Aorta (tissue), 5 donors: ENCODE measurements at regions of chr6 and their contacts with region 1.

Region 1: DNA sequence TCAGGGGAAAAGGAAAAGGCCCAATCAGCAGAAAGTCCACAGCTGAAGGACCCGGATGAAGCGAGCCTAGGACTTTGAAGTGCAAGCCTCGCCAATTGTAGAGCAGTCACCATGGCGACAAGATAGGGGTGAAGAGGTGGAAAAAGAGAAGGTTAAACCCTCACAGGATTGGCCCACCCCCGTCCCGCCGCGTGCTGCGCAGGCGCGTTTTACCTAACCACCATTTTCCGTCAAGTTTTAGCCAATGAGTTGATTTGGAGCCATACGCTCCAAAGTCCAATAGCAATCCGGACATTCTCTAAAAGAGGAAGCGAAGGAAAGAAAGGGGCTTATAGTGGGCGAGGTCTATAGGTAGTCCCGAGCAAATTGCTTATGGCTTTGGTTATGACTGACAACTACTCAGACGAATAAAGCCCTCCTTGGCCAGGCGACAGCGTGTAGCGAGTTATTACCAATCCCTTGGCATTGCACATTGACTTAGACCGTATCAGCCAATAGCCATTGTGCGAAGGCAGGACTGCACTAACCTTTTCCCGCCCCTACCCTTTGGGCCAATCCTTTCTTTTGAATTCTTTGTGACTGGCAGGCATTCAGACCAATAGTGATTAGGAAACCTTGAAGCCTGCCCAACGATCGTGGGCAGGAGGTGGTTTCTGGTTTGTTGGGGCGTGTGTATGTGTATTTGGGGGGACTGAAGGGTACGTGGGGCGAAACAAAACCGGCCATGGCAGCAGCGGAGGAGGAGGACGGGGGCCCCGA is at the start of gene RNF5:
- DNase-seq: peak; percentile 95 to 98
- ATAC-seq: peak; percentile 93
- H3K4me3 ChIP-seq: peak within 1 kb of the TSS; percentile 45 to 54
- H3K27ac ChIP-seq: peak within 1 kb of the TSS; percentile 95
- H3K4me1 ChIP-seq: peaks cover 0 to 2% of the 10 kb centered on the region in 2 donors
- H3K27me3 ChIP-seq: no peaks in the 10 kb centered on the region
- total RNA-seq, gene RNF5: 35.0 to 44.5 TPM

Region 2: DNA sequence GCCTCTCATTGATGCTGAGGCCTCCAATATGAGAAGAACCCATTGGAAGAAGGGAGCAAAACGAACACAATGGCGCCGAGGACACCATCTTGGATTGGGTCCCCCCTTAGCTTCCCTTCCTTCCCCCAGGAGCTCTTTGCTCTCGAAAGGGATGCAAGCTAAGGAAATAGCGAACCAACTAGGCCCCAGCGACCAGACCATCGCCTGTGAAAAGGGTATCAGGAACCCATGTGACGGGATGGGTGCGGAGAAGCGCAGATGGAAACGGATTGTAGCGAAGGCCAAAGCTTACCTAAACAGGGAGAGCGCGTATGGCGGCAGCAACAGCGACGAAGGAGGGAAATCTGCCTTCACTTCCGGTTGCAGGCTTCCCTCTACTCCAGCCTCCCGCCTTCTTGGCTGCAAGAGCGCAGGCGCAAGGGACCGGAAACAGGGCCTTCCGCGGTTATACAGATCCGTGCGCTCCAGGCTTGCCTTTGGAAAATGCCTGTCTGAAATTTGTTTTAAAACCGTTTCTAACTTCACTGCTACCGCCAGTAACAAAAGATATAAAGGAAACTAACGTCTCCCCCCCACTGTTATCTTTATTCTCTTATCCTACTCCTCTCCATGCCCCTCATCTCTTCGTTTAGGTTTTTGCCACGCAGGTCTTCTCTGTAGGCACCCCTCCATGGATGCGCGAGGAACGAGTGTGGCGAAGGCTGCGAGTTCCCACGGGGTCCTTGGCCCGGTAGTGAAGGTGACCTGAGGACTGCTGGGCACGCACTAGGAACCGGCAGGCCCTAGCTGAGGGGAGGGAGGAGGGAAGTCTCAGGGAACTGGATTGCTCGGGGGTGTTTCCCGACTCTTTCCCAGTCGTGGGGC is 636.1 kb before region 1 on chr6 and contains the start of gene DDX39B:
- intact Hi-C with region 1: loop called in 1 of 2 experiments (anchors 5 kb)
- DNase-seq: peak; percentile 97
- ATAC-seq: peak; percentile 97
- H3K4me3 ChIP-seq: peak within 1 kb of the TSS; percentile 77 to 78
- H3K27ac ChIP-seq: peak within 1 kb of the TSS; percentile 47 to 94
- H3K4me1 ChIP-seq: peaks cover 3% of the 10 kb centered on the region in 2 donors
- H3K27me3 ChIP-seq: no peaks in the 10 kb centered on the region
- total RNA-seq, gene DDX39B: 235 to 270 TPM

Region 3: DNA sequence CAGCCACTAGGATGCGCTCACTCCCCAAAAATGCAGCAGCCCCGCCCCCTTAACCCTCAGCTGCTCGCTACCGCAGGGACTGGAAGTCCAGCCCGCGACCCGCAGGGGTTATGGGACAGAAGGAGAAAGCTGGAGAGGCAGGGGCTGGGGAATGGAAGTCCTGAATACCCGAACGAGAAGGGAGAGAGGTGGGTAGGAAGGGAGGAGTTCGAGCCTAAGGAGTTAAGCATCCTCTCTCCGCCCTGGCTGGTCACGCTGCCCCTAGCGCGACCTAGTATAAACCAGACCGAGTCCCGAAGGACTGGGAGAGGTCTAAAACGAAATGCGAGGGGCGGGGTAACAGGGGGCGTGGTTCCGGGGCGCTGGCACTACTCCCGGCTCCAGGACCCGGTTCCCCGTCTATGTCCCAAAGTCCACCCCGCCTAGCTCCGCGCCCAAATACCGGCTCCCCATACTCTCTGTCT is 448.4 kb before region 1 on chr6:
- intact Hi-C with region 1: loop called in 1 of 2 experiments (anchors 5 kb)
- DNase-seq: peak; percentile 96 to 97
- ATAC-seq: peak; percentile 93
- H3K4me3 ChIP-seq: peak overlapping the region; percentile 83 to 92
- H3K27ac ChIP-seq: peak overlapping the region; percentile 88 to 94
- H3K4me1 ChIP-seq: no peaks in the 10 kb centered on the region
- H3K27me3 ChIP-seq: no peaks in the 10 kb centered on the region

Region 4: GRCh38 chr6:31901953-31902643 is 275.9 kb before region 1 on chr6 and contains the start of gene ZBTB12:
- intact Hi-C with region 1: loop called in 1 of 2 experiments (anchors 10 kb)
- DNase-seq: peak; percentile 93 to 95
- ATAC-seq: peak; percentile 89
- H3K4me3 ChIP-seq: peak within 1 kb of the TSS; percentile 79 to 87
- H3K27ac ChIP-seq: peak within 1 kb of the TSS in 1 of 2 donors; percentile 56
- H3K4me1 ChIP-seq: no peaks in the 10 kb centered on the region
- H3K27me3 ChIP-seq: no peaks in the 10 kb centered on the region
- total RNA-seq, gene ZBTB12: 1.8 to 4.9 TPM

Region 5: GRCh38 chr6:31971993-31972708 is 205.8 kb before region 1 on chr6 and contains the start of gene DXO:
- intact Hi-C with region 1: loop called in 1 of 2 experiments (anchors 10 kb)
- DNase-seq: peak; percentile 98
- ATAC-seq: peak; percentile 96
- H3K4me3 ChIP-seq: peak within 1 kb of the TSS; percentile 40 to 70
- H3K27ac ChIP-seq: peak within 1 kb of the TSS; percentile 83 to 85
- H3K4me1 ChIP-seq: no peaks in the 10 kb centered on the region
- H3K27me3 ChIP-seq: no peaks in the 10 kb centered on the region
- total RNA-seq, gene DXO: 20.2 to 20.5 TPM

Region 6: GRCh38 chr6:32129297-32130088 is 48.5 kb before region 1 on chr6:
- intact Hi-C with region 1: loop called in 1 of 2 experiments (anchors 1 kb)
- DNase-seq: no peak
- ATAC-seq: peak; percentile 82
- H3K4me3 ChIP-seq: peak overlapping the region; percentile 48 to 81
- H3K27ac ChIP-seq: peak overlapping the region; percentile 5 to 92
- H3K4me1 ChIP-seq: peaks cover 0 to 2% of the 10 kb centered on the region in 2 donors
- H3K27me3 ChIP-seq: no peaks in the 10 kb centered on the region

Region 7: DNA sequence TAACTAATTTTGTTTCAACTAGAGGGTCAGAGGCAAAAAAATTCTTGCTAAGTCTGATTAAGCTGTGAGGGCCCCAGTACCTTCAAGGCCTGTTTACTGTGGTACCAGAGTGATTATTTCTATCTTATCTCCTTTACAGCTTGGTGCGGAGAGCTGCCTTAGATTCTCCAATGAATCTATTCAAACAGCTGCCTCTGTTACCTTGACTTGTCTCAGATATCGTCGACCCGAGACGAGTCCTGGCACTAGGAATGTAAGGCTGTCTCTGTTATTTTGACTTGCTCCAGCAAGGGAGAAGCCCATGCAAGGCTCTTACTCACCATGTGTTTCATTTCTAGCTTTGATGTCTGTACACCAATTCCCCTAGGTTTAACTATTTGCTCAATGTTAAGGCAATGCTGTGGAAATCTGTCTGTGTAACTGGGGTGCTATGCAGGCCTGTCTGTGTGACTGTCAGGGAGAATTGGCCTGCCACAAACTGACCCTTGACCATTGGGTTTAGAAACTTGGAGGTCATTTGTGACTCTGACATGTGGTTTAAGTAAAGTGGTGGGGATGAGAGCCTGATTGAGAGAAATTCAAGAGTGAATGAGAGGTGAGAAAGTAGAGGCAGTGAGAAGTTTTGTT is 37.4 kb before region 1 on chr6:
- intact Hi-C with region 1: no loop called
- DNase-seq: no peak
- ATAC-seq: no peak
- H3K4me3 ChIP-seq: no peak overlapping the region
- H3K27ac ChIP-seq: no peak overlapping the region
- H3K4me1 ChIP-seq: no peaks in the 10 kb centered on the region
- H3K27me3 ChIP-seq: no peaks in the 10 kb centered on the region

Region 8: DNA sequence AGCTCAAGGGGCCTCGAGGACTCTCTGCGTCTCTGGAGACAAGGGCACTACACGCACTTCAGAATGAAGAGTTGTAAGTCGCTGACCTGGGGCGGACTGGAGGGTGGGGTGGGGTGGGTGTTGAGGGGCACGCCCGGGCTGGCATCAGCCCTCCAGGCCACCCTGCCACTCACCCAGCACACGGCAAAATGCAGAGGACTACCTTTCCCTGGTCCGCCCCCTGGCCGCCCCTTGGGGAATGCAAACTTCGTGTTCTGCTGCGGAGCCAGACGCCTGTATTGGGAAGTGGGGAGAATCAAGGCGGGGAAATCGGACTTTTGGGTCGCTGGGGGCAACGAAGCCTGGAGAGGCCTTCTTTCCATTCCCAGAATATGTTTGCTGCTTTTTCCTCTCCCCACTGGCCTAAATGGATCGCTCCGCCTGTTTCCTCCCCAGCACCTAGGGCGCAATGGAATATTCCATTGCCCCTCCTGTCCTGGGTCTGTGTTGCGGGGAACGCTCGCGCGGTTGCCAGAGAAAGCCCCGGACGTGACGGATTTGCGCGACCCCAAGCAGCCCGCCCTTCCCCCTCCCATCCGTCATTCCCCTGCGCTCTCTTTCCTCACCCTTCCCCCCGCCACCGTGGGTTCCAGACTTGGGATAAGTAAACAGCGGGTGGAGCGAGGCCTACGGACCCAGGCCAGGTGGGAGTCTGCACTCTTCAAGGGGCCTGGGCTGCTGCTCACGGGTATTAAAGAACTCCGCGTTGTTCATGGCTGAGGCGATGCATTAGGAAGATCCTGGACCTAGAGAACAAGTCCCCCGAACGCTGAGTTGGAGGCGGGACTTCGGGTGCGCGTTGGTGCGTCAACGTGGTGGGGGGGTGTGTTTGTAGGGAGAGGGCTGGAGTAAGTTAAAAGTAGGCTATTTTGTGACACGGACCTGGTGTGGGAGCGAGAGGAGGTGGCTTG is 24.1 kb before region 1 on chr6 and contains the start of gene PPT2:
- intact Hi-C with region 1: loop called in 1 of 2 experiments (anchors 2 kb)
- DNase-seq: peak; percentile 95 to 96
- ATAC-seq: peak; percentile 93
- H3K4me3 ChIP-seq: peak within 1 kb of the TSS; percentile 64 to 73
- H3K27ac ChIP-seq: peak within 1 kb of the TSS; percentile 49 to 87
- H3K4me1 ChIP-seq: peaks cover 0 to 3% of the 10 kb centered on the region in 2 donors
- H3K27me3 ChIP-seq: no peaks in the 10 kb centered on the region
- total RNA-seq, gene PPT2: 26.0 to 37.6 TPM